ENCODE measurements at regions of chr4 and their contacts with region 1.

Region 1: GRCh38 chr4:152849350-152849749 is 69.6 kb downstream of the ARFIP1 start:
- DNase-seq: no peak

Region 2: DNA sequence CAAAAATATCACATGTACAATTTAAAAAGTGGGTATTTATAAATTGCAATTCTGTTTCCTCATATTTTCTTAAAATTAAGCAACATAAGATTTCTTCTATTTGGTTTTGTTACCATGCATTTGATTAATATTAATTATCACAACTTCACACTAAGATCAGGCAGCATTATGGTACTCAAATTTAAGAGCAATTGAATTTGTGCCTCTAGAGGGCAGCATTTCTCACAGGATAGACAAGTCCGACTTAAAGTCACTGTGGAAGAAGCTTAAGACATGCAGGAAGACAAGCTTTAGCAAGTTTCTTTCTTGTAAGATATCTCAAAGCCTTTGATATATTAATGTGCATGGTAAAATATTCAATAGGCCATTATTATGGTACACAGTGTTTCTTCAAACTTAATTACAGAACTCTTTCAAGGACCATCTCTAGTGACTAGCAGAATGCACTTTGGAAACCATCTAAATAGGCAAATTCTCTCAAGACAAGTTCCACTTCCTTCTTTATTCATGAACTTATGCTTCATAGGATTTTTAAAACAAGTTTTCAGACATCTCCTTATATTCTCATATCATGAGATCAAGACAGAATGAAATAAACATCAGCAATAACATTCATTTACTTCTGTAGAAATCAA is 348.4 kb before region 1 on chr4:
- intact Hi-C with region 1: no loop called
- DNase-seq: peak in 26 of 42 donors; percentile 17 to 86 (median 63)

Region 3: DNA sequence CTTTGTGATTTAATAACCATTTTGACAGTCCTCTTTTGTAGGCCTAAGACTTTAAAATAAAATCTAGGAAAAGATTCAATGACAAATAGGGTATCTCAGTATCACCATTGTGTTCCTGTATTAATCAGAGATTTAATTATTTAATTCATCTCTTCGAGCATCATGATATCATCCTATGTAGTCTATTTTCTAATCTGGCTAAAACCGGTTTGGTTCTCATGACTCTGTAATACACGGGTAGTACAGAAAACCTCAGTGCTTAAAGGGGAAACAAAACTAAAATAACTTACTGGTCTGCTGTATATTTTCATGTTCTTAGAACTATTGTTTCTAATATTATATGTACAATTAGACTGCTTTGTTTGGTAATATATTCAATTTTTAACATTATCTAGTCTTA is 289.7 kb before region 1 on chr4:
- intact Hi-C with region 1: no loop called
- DNase-seq: no peak

Region 4: DNA sequence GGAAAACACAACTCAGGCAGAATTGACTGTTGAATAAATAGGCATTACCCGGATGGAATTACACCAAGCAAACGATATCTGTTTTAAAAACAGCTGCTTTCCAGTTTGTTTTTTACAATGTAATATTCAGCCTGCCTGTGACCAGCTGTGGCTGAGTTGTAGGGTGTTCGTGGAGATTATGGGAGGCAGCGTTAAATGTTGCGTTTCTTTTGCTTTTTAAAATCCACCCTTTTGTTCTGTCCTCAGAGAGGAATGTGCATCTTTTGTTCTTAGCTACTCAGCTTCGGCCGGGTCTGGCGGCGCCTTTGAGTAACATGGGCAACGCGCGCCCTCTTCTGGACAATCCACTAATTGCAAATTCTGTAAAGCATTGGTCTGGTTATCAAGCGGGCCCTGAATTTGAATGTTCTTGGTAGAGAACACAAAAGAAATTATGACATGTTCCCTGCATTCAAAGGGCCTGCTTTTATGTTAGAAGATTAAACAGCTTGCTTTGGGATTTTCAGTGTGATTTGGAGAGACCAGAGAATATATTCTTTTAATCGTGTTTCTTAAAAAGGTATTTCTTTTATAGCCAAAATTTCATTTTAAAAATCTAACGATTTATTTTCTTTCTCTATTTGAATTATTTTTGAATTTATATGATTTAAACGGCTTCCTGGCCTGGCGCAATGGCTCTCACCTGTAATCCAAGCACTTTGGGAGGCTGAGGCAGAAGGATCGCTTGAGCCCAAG is 278.6 kb after region 1 on chr4:
- intact Hi-C with region 1: loop called (anchors 5 kb)
- DNase-seq: peak; percentile 81 to 99 (median 94)

Measured in head of caudate nucleus (tissue), 42 donors.